B cell (primary cell): ENCODE measurements at regions of chr11 and their contacts with region 1.

Region 1: DNA sequence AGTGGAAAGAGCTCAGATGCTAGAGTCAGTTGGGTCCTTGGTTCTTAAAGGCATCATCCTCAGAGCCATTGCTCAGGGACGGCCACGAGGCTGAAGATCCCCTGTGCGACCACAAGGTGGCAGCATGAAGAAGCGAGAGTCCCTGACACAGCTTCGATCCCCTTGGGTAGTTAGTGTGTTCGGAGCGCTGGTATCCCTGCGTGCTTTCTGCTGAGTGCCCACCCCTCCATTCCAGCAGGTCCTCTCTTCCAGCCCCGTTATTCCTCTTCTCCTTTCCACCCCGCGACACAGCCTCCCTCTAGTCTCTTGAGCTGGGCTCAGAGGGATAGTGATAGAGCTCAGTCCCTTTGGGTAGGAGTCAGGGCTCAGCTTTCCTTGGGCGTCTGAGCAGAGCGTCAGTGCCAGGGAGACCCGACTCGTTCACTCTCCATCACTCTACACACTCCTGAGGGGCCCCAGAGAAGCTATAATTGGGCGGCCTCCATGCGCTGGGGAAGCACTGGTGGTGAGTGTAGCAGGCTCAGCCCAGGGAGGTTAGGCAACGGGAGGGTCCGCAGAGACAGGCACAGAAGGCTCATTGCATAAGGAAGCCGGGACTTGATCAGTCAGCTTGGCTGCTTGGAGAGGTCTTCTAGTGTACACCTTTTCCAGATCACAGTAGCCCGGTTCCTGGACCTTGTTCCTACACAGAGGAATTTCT is at the start of gene OR51D1:
- DNase-seq: peak; percentile 71
- ATAC-seq: peak; percentile 73
- H3K4me3 ChIP-seq: no peak within 1 kb of the TSS
- H3K4me3 Mint-ChIP-seq: no peak within 1 kb of the TSS
- H3K27ac ChIP-seq: no peak within 1 kb of the TSS
- H3K27ac Mint-ChIP-seq: no peak within 1 kb of the TSS
- H3K4me1 ChIP-seq: peaks cover 0 to 3% of the 10 kb centered on the region in 2 donors
- H3K4me1 Mint-ChIP-seq: no peaks in the 10 kb centered on the region
- H3K27me3 ChIP-seq: peaks cover 0 to 10% (median 5%) of the 10 kb centered on the region in 4 experiments
- H3K27me3 Mint-ChIP-seq: peaks cover 13% of the 10 kb centered on the region
- CTCF ChIP-seq: peak; percentile 92
- total RNA-seq, gene OR51D1: not detected in 2 replicates

Region 2: DNA sequence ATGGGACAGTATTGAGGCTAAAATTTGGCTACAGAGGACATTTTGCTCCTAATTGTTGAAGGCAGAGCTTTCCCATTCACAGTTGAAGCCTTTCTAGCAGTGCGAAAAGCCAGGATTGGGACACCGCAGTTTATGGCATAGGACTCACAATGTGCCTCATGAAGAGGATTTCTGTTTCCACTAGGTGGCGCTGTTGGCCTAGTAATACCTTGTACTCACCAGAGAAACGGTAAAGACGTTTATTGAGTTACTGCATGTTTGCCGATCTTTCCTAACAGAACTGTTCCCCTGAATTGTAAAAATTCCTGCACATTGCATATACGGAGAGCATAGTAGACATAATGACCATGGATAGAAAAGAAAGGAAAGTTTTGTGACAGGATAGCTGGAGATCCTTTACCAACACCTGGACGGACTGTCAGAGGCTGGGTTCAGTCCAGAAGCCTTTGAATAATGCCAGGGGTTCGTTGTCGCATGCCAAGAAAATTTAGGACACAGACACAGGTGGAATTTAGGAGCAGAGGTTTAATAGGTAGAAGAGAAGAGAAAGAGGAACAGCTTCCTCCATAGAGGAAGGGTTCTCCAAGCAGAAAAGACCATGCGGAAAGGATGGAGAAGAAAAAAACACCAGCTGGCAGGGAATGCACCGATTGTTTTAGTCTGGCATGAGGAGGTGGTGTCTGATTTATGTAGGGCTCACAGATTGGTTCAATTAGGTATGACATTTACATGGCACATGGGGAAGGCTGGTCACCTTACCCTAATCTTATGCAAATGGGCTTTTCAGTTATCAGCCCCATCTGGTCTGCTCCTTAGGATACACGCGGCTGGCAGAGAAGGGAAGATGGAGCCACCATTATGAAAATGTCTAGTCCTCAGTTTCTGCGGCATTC is 10.7 kb before region 1 on chr11:
- CTCF ChIA-PET with region 1: interaction called, 24 read pairs
- POLR2A ChIA-PET with region 1: no interaction called
- intact Hi-C with region 1: no loop called
- DNase-seq: peak; percentile 46
- ATAC-seq: no peak
- H3K4me3 ChIP-seq: no peak overlapping the region
- H3K4me3 Mint-ChIP-seq: no peak overlapping the region
- H3K27ac ChIP-seq: no peak overlapping the region
- H3K27ac Mint-ChIP-seq: no peak overlapping the region
- H3K4me1 ChIP-seq: no peaks in the 10 kb centered on the region
- H3K4me1 Mint-ChIP-seq: no peaks in the 10 kb centered on the region
- H3K27me3 ChIP-seq: peaks cover 0 to 10% (median 8%) of the 10 kb centered on the region in 4 experiments
- H3K27me3 Mint-ChIP-seq: peaks cover 51% of the 10 kb centered on the region
- CTCF ChIP-seq: peak; percentile 69

Region 3: GRCh38 chr11:5891216-5891800 is 1254.2 kb after region 1 on chr11:
- CTCF ChIA-PET with region 1: interaction called, 16 read pairs
- POLR2A ChIA-PET with region 1: no interaction called
- intact Hi-C with region 1: loop called (anchors 2 kb)
- DNase-seq: peak; percentile 20
- ATAC-seq: no peak
- H3K4me3 ChIP-seq: no peak overlapping the region
- H3K4me3 Mint-ChIP-seq: no peak overlapping the region
- H3K27ac ChIP-seq: no peak overlapping the region
- H3K27ac Mint-ChIP-seq: no peak overlapping the region
- H3K4me1 ChIP-seq: no peaks in the 10 kb centered on the region
- H3K4me1 Mint-ChIP-seq: no peaks in the 10 kb centered on the region
- H3K27me3 ChIP-seq: peaks cover 0 to 3% (median 0%) of the 10 kb centered on the region in 4 experiments
- H3K27me3 Mint-ChIP-seq: peaks cover 7% of the 10 kb centered on the region
- CTCF ChIP-seq: peak; percentile 72

Region 4: GRCh38 chr11:6353367-6353987 is 1716.4 kb after region 1 on chr11:
- CTCF ChIA-PET with region 1: interaction called, 13 read pairs
- POLR2A ChIA-PET with region 1: no interaction called
- intact Hi-C with region 1: loop called (anchors 5 kb)
- DNase-seq: peak; percentile 71
- ATAC-seq: peak; percentile 64
- H3K4me3 ChIP-seq: no peak overlapping the region
- H3K4me3 Mint-ChIP-seq: no peak overlapping the region
- H3K27ac ChIP-seq: no peak overlapping the region
- H3K27ac Mint-ChIP-seq: no peak overlapping the region
- H3K4me1 ChIP-seq: peaks cover 0 to 6% of the 10 kb centered on the region in 2 donors
- H3K4me1 Mint-ChIP-seq: no peaks in the 10 kb centered on the region
- H3K27me3 ChIP-seq: peaks cover 0 to 5% (median 0%) of the 10 kb centered on the region in 4 experiments
- H3K27me3 Mint-ChIP-seq: no peaks in the 10 kb centered on the region
- CTCF ChIP-seq: peak; percentile 98